ENCODE measurements at regions of chr19 and their contacts with region 1.

Region 1: GRCh38 chr19:23440791-23441190 is 45.5 kb upstream of the ZNF91 start:
- DNase-seq: peak in 1 of 2 experiments; percentile 31
- H3K4me3 ChIP-seq: no peak overlapping the region
- H3K4me3 Mint-ChIP-seq: no peak overlapping the region
- H3K27ac Mint-ChIP-seq: no peak overlapping the region
- H3K4me1 ChIP-seq: no peaks in the 10 kb centered on the region
- H3K4me1 Mint-ChIP-seq: no peaks in the 10 kb centered on the region
- H3K27me3 ChIP-seq: no peaks in the 10 kb centered on the region
- H3K27me3 Mint-ChIP-seq: no peaks in the 10 kb centered on the region
- CTCF ChIP-seq: peak; percentile 14 to 52

Region 2: GRCh38 chr19:23190341-23190740 is 250.4 kb before region 1 on chr19:
- CTCF ChIA-PET with region 1: no interaction called
- POLR2A ChIA-PET with region 1: no interaction called
- intact Hi-C with region 1: loop called (anchors 5 kb)
- DNase-seq: no peak
- H3K4me3 ChIP-seq: no peak overlapping the region
- H3K4me3 Mint-ChIP-seq: no peak overlapping the region
- H3K27ac Mint-ChIP-seq: no peak overlapping the region
- H3K4me1 ChIP-seq: no peaks in the 10 kb centered on the region
- H3K4me1 Mint-ChIP-seq: no peaks in the 10 kb centered on the region
- H3K27me3 ChIP-seq: no peaks in the 10 kb centered on the region
- H3K27me3 Mint-ChIP-seq: no peaks in the 10 kb centered on the region
- CTCF ChIP-seq: no peak

Region 3: DNA sequence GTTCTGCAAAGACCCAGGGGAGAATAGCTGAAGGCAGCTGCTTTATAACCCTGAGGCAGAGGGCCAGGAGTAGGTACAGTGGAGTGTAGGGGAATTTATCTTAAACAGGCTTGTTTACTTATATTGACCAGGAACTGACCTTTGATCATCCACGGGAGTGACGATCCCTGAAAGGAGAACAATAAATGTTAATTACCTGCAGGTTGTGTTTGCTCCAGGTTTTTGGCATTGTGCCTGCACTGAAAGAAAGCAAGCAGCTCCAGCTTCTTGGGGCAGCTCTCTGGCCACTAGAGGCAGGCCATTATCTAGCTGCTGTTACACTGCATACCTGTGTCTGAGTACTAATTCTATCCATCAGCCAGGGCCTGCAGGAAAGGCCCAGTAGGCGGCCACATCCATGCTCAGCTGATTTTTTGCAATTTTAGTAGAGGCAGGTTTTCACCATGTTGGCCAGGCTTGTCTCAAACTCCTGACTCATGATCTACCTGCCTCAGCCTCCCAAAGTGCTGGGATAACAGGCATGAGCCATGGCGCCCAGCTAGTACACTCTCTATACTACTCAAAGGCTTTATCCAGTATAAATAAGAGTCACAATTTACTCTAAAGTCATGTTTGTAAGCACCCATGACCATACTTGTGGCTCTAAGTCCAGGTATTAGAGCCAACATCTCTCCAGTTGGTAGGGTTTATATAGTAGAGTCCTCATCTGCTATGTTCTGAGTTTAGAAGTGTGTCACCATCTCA is 37.0 kb before region 1 on chr19:
- CTCF ChIA-PET with region 1: no interaction called
- POLR2A ChIA-PET with region 1: no interaction called
- intact Hi-C with region 1: loop called (anchors 5 kb)
- DNase-seq: peak; percentile 48 to 77
- H3K4me3 ChIP-seq: no peak overlapping the region
- H3K4me3 Mint-ChIP-seq: no peak overlapping the region
- H3K27ac Mint-ChIP-seq: no peak overlapping the region
- H3K4me1 ChIP-seq: peaks cover 12% of the 10 kb centered on the region
- H3K4me1 Mint-ChIP-seq: no peaks in the 10 kb centered on the region
- H3K27me3 ChIP-seq: no peaks in the 10 kb centered on the region
- H3K27me3 Mint-ChIP-seq: no peaks in the 10 kb centered on the region
- CTCF ChIP-seq: peak in 1 of 2 experiments; percentile 9